Dendritic cell treated with granulocyte-macrophage colony-stimulating factor and Interleukin-4, amounts not matched to agents 40 ng/mL and 50 ng/mL, for 4 days (primary cell): ENCODE measurements at regions of chr1 and their contacts with region 1.

Region 1: DNA sequence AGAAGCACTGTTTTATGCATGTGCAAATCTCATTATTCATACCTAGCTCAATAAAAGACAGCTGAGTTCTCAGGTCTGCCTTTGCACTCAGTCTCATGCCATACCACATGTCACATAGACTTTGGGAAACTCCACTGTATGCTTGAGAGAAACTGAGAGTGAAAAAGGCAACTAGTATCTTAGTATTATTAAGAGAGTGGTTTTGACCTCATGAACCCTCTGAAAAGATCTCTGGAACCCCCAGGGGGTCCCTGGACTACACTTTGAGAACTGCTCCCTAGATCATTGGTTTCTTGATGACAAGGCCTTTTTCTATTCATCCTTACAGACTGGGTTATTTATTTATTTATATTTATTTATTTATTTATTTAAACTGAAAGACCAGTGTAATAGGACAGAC is 3.7 kb upstream of the RHEX start:
- H3K4me3 Mint-ChIP-seq: no peak overlapping the region
- H3K27ac Mint-ChIP-seq: no peak overlapping the region
- H3K4me1 Mint-ChIP-seq: peaks cover 46% of the 10 kb centered on the region
- H3K27me3 Mint-ChIP-seq: no peaks in the 10 kb centered on the region

Region 2: DNA sequence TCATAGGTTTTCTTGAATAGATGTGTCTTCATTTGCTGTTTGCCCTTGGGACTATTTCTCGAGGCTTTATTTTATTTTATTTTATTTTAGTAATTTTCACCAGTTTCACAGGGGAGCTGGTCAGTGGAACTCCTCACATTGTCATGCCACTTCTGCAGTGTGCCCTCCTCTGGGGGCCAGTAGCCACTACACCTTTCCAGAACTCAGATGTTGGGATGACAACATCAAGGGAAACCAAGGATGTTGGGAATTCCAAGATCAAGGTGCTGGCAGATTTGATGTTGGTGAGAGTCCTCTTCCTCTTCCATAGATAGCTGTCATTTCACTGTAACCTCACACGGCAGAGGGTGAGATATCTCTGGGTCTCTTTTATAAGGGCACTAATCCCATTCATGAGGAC is 141.5 kb before region 1 on chr1:
- intact Hi-C with region 1: no loop called
- H3K4me3 Mint-ChIP-seq: no peak overlapping the region
- H3K27ac Mint-ChIP-seq: no peak overlapping the region
- H3K4me1 Mint-ChIP-seq: no peaks in the 10 kb centered on the region
- H3K27me3 Mint-ChIP-seq: peaks cover 7% of the 10 kb centered on the region

Region 3: DNA sequence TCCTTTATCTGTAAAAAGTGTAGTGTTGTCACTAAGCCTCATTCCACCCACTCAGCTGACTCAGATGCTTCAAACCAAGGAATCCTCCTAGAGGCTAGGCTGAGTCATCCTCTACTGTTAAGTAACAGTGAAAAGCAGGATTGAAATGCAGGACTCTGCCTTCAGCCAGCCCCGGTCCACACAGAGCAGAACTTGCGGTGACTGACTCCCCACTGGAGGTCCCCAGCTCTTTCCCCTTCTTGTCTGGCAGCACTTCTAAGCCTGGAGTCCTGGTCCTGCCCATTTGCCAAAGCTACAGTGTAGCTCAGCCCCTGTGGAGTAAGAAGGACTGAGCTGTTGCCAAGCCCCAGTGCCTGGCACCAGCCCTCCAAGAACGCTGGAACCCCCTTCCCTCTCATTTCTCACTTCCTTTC is 47.8 kb before region 1 on chr1:
- intact Hi-C with region 1: loop called (anchors 5 kb)
- H3K4me3 Mint-ChIP-seq: peak overlapping the region; percentile 67
- H3K27ac Mint-ChIP-seq: peak overlapping the region; percentile 71
- H3K4me1 Mint-ChIP-seq: peaks cover 90% of the 10 kb centered on the region
- H3K27me3 Mint-ChIP-seq: no peaks in the 10 kb centered on the region

Region 4: DNA sequence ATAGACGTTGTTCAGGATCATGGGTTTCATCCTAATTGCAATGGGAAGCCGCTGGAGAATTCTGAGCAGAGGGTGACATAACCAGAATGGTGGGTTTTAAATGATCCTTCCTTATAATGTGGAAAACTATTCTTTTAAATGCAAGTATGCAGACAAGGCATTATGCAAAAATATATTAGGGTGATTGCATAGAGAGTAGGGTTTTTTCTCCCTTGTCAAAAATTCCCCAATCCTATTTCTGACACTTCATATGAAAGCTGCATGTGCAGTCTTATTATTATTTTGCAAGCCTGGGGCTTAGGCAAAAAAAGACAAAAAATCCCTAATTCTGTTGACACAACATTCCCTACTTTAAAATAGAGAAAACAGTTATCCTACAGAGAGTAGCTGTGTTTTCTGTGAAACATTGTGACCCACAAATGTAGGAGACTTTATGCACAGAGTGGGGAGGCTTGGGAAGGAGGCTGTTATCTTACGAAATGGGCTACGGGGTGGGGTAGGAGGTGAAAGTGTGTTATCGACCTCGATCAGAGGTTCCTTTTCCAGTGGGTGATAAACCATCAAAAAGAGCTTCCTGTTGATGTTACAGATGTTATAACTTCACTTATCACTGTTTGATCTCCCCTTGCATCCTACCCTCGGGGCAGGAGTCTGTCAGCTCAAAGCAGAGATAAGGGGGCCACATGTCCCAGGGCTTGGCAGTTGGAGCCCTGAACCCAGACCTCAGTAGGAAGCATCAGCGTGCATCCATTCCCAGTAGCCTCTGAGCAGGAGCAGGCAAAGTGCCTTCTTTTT is 30.9 kb after region 1 on chr1:
- intact Hi-C with region 1: loop called (anchors 5 kb)
- H3K4me3 Mint-ChIP-seq: no peak overlapping the region
- H3K27ac Mint-ChIP-seq: no peak overlapping the region
- H3K4me1 Mint-ChIP-seq: peaks cover 45% of the 10 kb centered on the region
- H3K27me3 Mint-ChIP-seq: no peaks in the 10 kb centered on the region